ENCODE measurements at regions of chr18 and their contacts with region 1.

Region 1: DNA sequence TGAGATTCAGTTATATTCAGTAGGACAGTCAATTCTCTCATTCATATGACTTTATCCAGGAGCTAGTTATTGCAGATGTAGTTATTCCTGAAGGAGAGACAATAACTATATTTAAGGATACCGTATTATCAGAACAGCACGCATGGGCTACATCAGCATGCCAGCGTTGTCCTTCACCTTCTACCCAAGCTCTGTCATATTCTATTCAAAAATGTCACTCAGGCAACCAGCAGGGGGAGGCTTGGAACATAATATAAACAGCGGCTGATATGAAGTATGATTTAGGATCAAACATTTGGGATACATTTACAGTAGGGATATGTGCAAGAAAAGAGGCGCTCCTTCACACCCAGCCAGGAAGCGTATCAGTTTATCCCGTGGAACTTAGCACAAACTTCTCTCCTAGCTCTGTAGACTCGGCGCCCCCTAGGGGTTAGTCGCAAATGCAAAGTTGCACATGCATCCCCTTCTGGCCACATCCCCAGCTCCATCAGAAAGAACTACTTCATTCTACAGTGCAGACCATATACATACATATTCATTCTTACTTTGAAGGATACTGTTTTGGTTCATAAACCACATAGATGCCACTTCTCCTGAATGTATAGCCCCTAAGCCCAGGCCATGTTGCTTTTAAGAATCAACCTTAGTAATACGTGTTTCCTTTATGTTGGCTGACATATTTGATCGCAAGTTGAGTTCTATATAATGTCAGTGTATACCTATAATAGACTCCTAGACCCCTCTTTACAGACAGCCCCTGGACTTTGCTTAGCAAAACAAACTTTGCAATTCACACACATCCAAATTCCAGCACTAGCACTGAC is 759.4 kb downstream of the ADCYAP1 start:
- DNase-seq: peak; percentile 49 to 69 (median 68)
- H3K4me3 ChIP-seq: peak overlapping the region in 2 of 7 experiments; percentile 42 to 56
- H3K27ac ChIP-seq: no peak overlapping the region
- H3K4me1 ChIP-seq: no peaks in the 10 kb centered on the region
- H3K27me3 ChIP-seq: peaks cover 0 to 2% (median 0%) of the 10 kb centered on the region in 5 experiments

Region 2: DNA sequence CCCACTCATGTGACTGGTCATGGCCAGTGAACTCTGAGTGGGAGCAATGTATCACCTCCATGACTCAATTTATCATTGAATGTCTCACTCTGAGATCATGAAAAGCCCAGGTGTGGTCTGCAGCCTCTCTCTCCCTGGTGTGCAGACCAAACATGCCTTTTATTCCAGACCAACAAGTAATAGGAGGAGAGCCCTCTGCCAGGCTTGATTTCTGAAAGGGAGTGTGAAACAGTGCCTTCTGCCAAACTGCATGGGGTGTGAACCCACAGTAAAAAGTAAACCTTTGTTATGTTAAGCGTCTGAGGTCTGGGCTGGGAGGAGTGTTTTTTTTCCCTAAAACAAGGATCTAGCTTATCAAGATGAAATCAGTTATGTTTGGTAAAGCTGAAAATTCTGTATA is 158.2 kb before region 1 on chr18:
- CTCF ChIA-PET with region 1: no interaction called
- POLR2A ChIA-PET with region 1: no interaction called
- DNase-seq: no peak
- H3K4me3 ChIP-seq: no peak overlapping the region
- H3K27ac ChIP-seq: no peak overlapping the region
- H3K4me1 ChIP-seq: no peaks in the 10 kb centered on the region
- H3K27me3 ChIP-seq: no peaks in the 10 kb centered on the region

Region 3: DNA sequence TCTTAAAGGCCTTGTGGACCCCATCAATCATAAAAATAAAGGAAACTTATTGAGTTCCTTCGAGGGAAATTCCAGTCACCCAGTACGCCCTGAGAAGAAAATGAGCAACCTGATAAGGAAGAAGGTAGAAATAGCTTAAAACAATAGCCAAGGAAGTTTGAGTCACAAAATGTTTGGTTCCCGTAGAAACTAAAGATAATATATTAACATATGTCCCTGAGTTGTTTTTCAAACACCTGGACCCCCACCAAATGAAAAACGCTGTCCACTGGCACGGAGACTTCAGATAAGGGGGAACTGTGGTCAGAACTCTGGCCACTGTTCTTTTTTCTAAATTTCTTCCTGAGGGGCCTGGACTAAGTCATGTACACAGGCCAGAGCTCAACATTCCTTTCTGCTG is 90.4 kb before region 1 on chr18:
- CTCF ChIA-PET with region 1: no interaction called
- POLR2A ChIA-PET with region 1: no interaction called
- DNase-seq: no peak
- H3K4me3 ChIP-seq: no peak overlapping the region
- H3K27ac ChIP-seq: no peak overlapping the region
- H3K4me1 ChIP-seq: peaks cover 0 to 12% (median 2%) of the 10 kb centered on the region in 4 experiments
- H3K27me3 ChIP-seq: no peaks in the 10 kb centered on the region

Region 4: DNA sequence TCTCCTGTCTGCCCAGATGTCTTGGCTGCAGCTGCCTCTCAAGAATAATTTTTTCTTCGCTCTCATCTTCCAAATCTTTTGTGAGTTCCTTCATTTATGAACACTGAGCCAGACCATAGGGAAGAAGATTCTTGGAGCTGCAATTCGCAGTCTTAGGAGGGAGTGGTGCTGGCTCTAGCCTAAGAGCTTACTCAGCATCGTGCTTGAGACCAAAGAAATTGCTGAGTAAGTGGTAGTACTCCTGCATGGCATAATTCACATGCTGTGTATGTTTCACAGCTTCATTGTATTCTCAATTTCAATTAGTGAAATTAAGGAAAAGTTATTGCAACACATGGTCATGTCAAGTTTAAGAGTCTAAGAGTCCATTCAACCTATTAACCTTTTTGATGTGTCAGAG is 12.3 kb after region 1 on chr18:
- CTCF ChIA-PET with region 1: interaction called, 13 read pairs
- POLR2A ChIA-PET with region 1: no interaction called
- DNase-seq: no peak
- H3K4me3 ChIP-seq: no peak overlapping the region
- H3K27ac ChIP-seq: no peak overlapping the region
- H3K4me1 ChIP-seq: no peaks in the 10 kb centered on the region
- H3K27me3 ChIP-seq: no peaks in the 10 kb centered on the region

Region 5: GRCh38 chr18:2121221-2121620 is 457.1 kb after region 1 on chr18:
- CTCF ChIA-PET with region 1: interaction called, 11 read pairs
- POLR2A ChIA-PET with region 1: no interaction called
- DNase-seq: peak in 1 of 3 donors; percentile 37
- H3K4me3 ChIP-seq: no peak overlapping the region
- H3K27ac ChIP-seq: no peak overlapping the region
- H3K4me1 ChIP-seq: no peaks in the 10 kb centered on the region
- H3K27me3 ChIP-seq: peaks cover 0 to 3% (median 0%) of the 10 kb centered on the region in 5 experiments

Measured in common myeloid progenitor, CD34-positive (primary cell).